Activated CD4-positive, alpha-beta T cell treated with anti-CD3 and anti-CD28 coated beads for 36 hours (primary cell): ENCODE measurements at regions of chr6 and their contacts with region 1.

Region 1: DNA sequence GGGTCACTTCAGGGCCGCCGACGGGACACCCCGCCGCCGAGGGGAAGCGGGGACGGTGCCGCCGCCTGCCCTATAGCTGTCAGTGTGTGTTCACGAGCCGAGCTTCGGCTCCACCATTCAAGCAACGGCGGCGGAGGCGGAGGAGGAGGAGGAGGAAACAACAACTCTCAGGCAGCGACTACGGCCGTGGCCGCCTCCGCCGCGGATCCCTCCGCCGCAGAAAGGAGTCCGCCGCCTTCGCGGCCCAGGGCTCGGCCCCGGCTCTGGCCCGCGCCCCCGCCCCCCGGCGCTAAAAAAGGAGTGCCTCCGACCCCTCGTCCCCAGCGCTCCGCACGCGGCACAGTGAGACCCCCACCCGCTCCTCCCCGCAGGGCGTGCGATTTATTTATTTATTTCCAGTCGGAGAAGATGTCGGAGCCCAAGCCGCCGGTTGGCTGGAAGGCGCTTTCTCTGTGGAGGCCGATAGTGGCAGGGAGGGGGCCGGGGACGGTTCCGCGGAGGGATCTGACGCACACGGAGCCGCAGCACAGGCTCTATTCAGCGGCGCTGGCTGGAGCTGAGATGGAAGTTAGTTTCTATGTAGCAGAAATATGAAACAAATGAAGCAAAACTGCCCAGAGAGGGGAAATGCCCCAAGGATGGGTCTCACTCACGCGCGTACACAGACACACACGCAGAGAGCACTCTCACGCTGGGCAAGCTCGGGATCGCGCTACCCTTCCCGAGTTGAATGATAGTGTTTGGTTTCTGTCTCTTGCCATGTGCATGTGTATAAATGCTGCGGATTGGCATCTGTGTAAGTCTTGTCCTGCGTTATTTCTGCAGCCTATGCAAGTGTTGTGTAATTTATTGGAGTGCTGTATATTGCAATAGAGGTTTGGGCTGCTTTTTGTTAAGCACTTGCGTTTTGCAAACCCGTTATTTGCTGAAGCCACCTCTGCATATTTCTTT is at the start of gene PHIP:
- DNase-seq: peak; percentile 95
- ATAC-seq: peak; percentile 82
- H3K4me3 Mint-ChIP-seq: peak within 1 kb of the TSS; percentile 89
- H3K27ac Mint-ChIP-seq: peak within 1 kb of the TSS; percentile 96
- H3K4me1 Mint-ChIP-seq: peaks cover 34% of the 10 kb centered on the region
- H3K27me3 Mint-ChIP-seq: peaks cover 7% of the 10 kb centered on the region
- total RNA-seq, gene PHIP: 24.8 to 25.5 TPM

Region 2: GRCh38 chr6:78995946-78996345 is 82.4 kb before region 1 on chr6:
- CTCF ChIA-PET with region 1: no interaction called
- POLR2A ChIA-PET with region 1: no interaction called
- intact Hi-C with region 1: no loop called
- DNase-seq: no peak
- ATAC-seq: no peak
- H3K4me3 Mint-ChIP-seq: no peak overlapping the region
- H3K27ac Mint-ChIP-seq: no peak overlapping the region
- H3K4me1 Mint-ChIP-seq: no peaks in the 10 kb centered on the region
- H3K27me3 Mint-ChIP-seq: no peaks in the 10 kb centered on the region

Region 3: DNA sequence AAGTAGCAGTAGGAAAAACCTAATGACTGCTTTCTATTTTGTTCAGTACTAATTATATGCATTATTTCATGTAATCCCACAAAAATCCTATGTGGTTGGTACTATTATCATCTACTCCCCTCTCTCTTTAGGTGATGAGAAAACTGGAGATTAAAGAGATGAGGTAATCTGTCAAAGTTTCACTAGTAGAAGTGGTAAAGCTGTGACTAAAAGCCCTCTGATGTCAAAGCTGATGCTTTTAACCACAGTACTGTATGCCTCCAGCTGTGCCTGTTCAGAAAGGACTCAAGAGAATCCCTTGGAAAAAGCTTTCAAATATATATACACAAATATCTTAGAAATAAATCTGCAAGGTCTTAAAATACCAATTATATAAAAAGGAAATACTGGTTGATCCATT is 38.3 kb before region 1 on chr6:
- CTCF ChIA-PET with region 1: interaction called, 4 read pairs
- POLR2A ChIA-PET with region 1: interaction called, 3 read pairs
- intact Hi-C with region 1: loop called in 1 of 2 experiments (anchors 1 kb)
- DNase-seq: peak; percentile 20
- ATAC-seq: peak; percentile 91
- H3K4me3 Mint-ChIP-seq: no peak overlapping the region
- H3K27ac Mint-ChIP-seq: no peak overlapping the region
- H3K4me1 Mint-ChIP-seq: peaks cover 66% of the 10 kb centered on the region
- H3K27me3 Mint-ChIP-seq: no peaks in the 10 kb centered on the region

Region 4: GRCh38 chr6:79335133-79335674 is 256.9 kb after region 1 on chr6:
- CTCF ChIA-PET with region 1: no interaction called
- POLR2A ChIA-PET with region 1: interaction called, 3 read pairs
- intact Hi-C with region 1: loop called in 1 of 2 experiments (anchors 10 kb)
- DNase-seq: peak; percentile 11
- ATAC-seq: peak; percentile 70
- H3K4me3 Mint-ChIP-seq: no peak overlapping the region
- H3K27ac Mint-ChIP-seq: no peak overlapping the region
- H3K4me1 Mint-ChIP-seq: peaks cover 31% of the 10 kb centered on the region
- H3K27me3 Mint-ChIP-seq: peaks cover 19% of the 10 kb centered on the region

Region 5: DNA sequence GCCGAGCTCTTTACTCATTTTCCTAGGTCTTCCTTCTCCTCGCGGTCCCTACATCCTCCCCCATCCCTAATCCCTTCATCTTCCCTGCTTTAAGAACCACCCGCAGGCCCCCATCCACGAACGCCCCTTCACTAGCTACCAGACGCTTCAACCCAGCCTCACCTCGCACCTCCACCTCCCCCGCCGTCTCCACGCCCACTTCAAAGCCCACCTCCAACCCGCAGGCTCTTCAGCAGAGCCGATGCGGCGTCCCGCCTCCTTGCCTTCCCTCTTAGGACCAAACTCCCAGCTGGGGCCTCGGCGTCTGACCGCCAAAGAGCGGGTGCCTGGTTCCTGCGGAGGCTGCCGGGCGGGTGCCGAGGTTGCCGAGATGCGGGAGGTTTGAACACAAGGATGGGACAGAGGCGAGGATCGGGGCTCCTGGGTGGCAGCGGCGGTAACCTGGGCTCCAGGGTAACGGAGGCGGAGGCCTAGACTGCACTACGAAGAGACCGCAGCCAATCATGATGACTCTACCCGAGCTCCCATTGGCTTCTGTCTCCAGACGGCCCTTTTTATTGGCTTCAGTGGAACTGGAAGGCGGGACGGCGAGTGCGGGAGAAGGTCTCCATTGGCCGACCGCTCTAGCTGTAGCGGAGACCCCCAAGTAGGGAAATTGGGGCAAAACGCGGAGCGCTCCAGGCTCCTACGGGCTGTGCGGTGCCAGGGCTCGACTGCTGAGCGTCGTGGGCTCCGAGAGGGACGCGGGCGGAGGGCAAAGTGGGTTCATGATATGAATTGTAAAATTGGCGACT is 458.8 kb after region 1 on chr6 and contains the start of gene LCA5:
- CTCF ChIA-PET with region 1: no interaction called
- POLR2A ChIA-PET with region 1: no interaction called
- intact Hi-C with region 1: loop called (anchors 1 to 2 kb)
- DNase-seq: peak; percentile 90
- ATAC-seq: peak; percentile 100
- H3K4me3 Mint-ChIP-seq: no peak within 1 kb of the TSS
- H3K27ac Mint-ChIP-seq: no peak within 1 kb of the TSS
- H3K4me1 Mint-ChIP-seq: no peaks in the 10 kb centered on the region
- H3K27me3 Mint-ChIP-seq: peaks cover 8% of the 10 kb centered on the region
- total RNA-seq, gene LCA5: 0.25 to 0.32 TPM

Region 6: DNA sequence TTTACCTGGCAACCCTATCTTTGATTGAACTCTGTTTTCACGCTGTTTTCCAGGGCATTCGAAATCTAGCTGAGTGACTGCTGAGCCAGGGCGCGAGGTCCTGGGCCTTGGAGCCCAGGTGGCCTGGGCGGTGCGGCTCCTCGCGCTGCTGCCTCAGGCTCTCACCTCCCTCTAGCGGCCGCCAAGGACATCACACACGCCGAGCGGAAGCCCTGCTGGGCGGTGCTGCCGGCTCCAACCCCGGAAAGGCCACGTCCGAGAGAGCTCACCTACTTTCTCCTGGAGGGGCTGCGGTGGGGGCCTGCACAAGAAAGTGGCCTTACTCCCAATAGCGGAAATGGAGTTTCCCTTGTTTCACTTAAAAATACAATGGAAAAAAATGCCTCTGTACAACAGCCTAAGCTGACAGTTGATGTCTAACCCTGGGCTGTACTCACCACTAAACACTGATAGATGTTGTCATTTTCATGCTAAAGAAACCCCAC is 791.3 kb after region 1 on chr6:
- CTCF ChIA-PET with region 1: no interaction called
- POLR2A ChIA-PET with region 1: no interaction called
- intact Hi-C with region 1: loop called in 1 of 2 experiments (anchors 5 kb)
- DNase-seq: peak; percentile 91
- ATAC-seq: peak; percentile 100
- H3K4me3 Mint-ChIP-seq: peak overlapping the region; percentile 42
- H3K27ac Mint-ChIP-seq: peak overlapping the region; percentile 23
- H3K4me1 Mint-ChIP-seq: peaks cover 8% of the 10 kb centered on the region
- H3K27me3 Mint-ChIP-seq: peaks cover 7% of the 10 kb centered on the region

Region 7: GRCh38 chr6:80106418-80107235 is 1028.3 kb after region 1 on chr6 and contains the start of gene BCKDHB:
- CTCF ChIA-PET with region 1: no interaction called
- POLR2A ChIA-PET with region 1: no interaction called
- intact Hi-C with region 1: loop called in 1 of 2 experiments (anchors 10 kb)
- DNase-seq: peak; percentile 98
- ATAC-seq: peak; percentile 98
- H3K4me3 Mint-ChIP-seq: peak within 1 kb of the TSS; percentile 90
- H3K27ac Mint-ChIP-seq: peak within 1 kb of the TSS; percentile 88
- H3K4me1 Mint-ChIP-seq: peaks cover 12% of the 10 kb centered on the region
- H3K27me3 Mint-ChIP-seq: peaks cover 6% of the 10 kb centered on the region
- total RNA-seq, gene BCKDHB: 13.1 to 21.4 TPM